Activated CD4-positive, alpha-beta memory T cell treated with anti-CD3 and anti-CD28 coated beads for 36 hours (primary cell): ENCODE measurements at regions of chr10 and their contacts with region 1.

Region 1: DNA sequence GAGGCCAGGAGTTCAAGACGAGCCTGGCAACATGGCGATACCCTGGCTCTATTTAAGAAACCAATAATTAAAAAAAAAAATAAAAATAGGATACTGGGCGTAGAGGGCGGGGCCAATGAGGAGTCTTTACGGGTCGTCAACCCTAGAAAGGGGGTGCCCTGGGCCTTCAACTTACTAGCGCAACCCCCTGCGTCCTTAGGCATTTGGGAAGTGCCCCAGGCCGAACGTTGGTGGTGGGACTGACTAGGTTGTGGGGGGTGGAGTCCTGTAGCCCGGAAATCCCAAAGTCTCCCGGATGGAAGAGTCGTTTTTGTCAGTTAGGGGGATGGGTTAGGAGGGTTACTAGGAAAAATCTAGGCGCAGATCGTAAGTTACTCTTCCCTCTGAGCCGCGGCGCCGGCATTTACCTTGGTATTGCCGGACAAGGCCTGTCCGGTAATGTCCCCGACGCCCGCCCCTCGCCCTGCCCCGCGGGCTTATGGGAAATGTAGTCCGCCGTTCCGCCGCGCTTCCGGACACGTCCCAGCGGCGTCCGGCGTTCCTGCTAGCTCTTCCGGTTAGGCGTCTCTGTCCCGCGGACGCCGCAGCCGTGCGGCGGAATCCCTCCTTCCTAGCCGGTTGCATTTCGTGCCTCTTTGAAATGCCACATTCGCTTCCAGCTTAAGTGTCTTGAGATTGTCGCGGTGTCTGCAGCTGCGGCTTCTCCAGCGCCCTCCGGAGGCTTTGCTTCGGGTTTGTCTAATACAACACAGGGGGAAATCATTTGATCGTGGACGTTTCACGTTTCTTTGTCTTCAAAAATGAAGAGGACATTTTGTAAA is 1.3 kb upstream of the ACBD5 start:
- DNase-seq: peak; percentile 93
- H3K4me3 Mint-ChIP-seq: peak overlapping the region; percentile 97
- H3K27ac Mint-ChIP-seq: peak overlapping the region; percentile 100
- H3K4me1 Mint-ChIP-seq: peaks cover 24% of the 10 kb centered on the region
- H3K27me3 Mint-ChIP-seq: no peaks in the 10 kb centered on the region

Region 2: DNA sequence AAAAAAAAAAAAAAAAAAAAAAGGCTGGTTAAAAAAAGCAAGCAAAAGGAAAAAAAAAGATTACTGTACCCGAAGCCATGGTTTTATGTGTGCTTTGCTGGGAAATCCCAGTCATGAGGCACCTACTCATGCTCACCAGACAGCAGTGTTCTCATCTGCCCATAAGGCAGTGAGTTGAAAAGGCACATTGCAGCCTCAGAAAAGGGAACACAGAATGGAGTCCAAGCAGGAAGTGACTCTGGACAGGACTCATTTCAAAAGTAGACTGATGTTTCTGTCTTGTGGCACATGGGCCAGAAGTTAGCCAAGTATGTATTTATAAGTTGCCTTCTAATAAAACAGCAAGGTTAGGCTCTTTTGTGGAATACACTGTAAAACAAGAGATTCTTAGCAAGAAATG is 504.1 kb before region 1 on chr10:
- CTCF ChIA-PET with region 1: no interaction called
- POLR2A ChIA-PET with region 1: no interaction called
- intact Hi-C with region 1: loop called (anchors 2 kb)
- DNase-seq: peak; percentile 75
- H3K4me3 Mint-ChIP-seq: no peak overlapping the region
- H3K27ac Mint-ChIP-seq: peak overlapping the region; percentile 97
- H3K4me1 Mint-ChIP-seq: peaks cover 58% of the 10 kb centered on the region
- H3K27me3 Mint-ChIP-seq: no peaks in the 10 kb centered on the region

Region 3: GRCh38 chr10:26969145-26969926 is 272.5 kb before region 1 on chr10:
- CTCF ChIA-PET with region 1: no interaction called
- POLR2A ChIA-PET with region 1: no interaction called
- intact Hi-C with region 1: no loop called
- DNase-seq: peak; percentile 26
- H3K4me3 Mint-ChIP-seq: no peak overlapping the region
- H3K27ac Mint-ChIP-seq: peak overlapping the region; percentile 34
- H3K4me1 Mint-ChIP-seq: peaks cover 21% of the 10 kb centered on the region
- H3K27me3 Mint-ChIP-seq: no peaks in the 10 kb centered on the region

Region 4: DNA sequence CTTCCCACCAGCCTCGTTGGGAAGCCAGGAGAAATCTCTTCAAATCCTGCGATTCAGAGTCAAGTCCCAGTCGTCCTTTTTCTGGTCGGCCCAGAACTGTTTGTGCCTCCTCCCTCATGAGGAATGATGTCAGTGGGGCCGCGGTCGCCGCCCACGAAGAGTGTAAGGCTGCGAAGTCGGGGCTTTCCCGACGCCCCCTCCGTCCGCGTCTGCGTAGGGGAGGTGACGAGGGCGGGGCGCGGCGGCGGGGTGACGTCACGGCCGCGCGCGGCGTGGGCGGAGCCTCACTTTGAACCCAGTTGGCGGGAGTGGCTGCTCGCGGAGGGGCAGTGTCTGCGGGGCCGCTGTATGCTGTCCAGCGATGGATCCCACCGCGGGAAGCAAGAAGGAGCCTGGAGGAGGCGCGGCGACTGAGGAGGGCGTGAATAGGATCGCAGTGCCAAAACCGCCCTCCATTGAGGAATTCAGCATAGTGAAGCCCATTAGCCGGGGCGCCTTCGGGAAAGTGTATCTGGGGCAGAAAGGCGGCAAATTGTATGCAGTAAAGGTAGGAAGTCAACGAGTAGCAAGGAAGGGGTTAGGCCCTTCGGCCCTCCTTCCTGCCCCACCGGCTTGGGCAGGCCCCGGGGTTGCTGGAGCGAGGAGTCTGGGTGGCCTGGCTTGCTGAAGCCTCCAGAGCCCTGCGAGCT is 86.7 kb before region 1 on chr10 and contains the start of gene MASTL:
- CTCF ChIA-PET with region 1: interaction called, 9 read pairs
- POLR2A ChIA-PET with region 1: interaction called, 30 read pairs
- intact Hi-C with region 1: loop called (anchors 1 kb)
- DNase-seq: peak; percentile 96
- H3K4me3 Mint-ChIP-seq: peak within 1 kb of the TSS; percentile 97
- H3K27ac Mint-ChIP-seq: peak within 1 kb of the TSS; percentile 100
- H3K4me1 Mint-ChIP-seq: peaks cover 39% of the 10 kb centered on the region
- H3K27me3 Mint-ChIP-seq: no peaks in the 10 kb centered on the region
- total RNA-seq, gene MASTL: 44.2 to 50.4 TPM

Region 5: GRCh38 chr10:27197980-27198620 is 43.8 kb before region 1 on chr10:
- CTCF ChIA-PET with region 1: no interaction called
- POLR2A ChIA-PET with region 1: no interaction called
- intact Hi-C with region 1: no loop called
- DNase-seq: no peak
- H3K4me3 Mint-ChIP-seq: no peak overlapping the region
- H3K27ac Mint-ChIP-seq: peak overlapping the region; percentile 5
- H3K4me1 Mint-ChIP-seq: no peaks in the 10 kb centered on the region
- H3K27me3 Mint-ChIP-seq: no peaks in the 10 kb centered on the region

Region 6: DNA sequence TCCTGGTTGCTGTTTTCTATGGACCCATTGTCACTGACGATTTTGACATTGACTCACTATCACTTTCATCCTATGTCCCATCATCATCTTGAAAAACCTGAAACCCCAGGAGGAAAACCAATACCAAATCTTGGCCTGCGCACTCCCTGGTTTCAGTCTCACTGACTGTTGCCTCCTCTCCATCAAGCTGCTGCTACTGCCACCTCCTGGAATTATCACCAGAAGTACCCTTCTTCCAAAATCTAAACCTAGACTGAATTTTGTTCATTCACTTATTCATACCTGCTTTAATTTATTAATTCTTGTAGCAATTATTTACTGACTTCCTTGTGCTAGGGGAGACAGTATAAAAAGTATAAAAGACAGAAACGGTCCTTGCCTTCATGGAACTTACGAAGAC is 43.2 kb after region 1 on chr10:
- CTCF ChIA-PET with region 1: no interaction called
- POLR2A ChIA-PET with region 1: no interaction called
- intact Hi-C with region 1: loop called (anchors 1 kb)
- DNase-seq: peak; percentile 70
- H3K4me3 Mint-ChIP-seq: no peak overlapping the region
- H3K27ac Mint-ChIP-seq: no peak overlapping the region
- H3K4me1 Mint-ChIP-seq: peaks cover 6% of the 10 kb centered on the region
- H3K27me3 Mint-ChIP-seq: no peaks in the 10 kb centered on the region

Region 7: GRCh38 chr10:27504007-27504807 is 262.3 kb after region 1 on chr10 and contains the start of gene RAB18:
- CTCF ChIA-PET with region 1: no interaction called
- POLR2A ChIA-PET with region 1: interaction called, 11 read pairs
- intact Hi-C with region 1: loop called (anchors 1 kb)
- DNase-seq: peak; percentile 99
- H3K4me3 Mint-ChIP-seq: peak within 1 kb of the TSS; percentile 100
- H3K27ac Mint-ChIP-seq: peak within 1 kb of the TSS; percentile 96
- H3K4me1 Mint-ChIP-seq: peaks cover 51% of the 10 kb centered on the region
- H3K27me3 Mint-ChIP-seq: no peaks in the 10 kb centered on the region
- total RNA-seq, gene RAB18: 51.7 to 54.0 TPM

Region 8: DNA sequence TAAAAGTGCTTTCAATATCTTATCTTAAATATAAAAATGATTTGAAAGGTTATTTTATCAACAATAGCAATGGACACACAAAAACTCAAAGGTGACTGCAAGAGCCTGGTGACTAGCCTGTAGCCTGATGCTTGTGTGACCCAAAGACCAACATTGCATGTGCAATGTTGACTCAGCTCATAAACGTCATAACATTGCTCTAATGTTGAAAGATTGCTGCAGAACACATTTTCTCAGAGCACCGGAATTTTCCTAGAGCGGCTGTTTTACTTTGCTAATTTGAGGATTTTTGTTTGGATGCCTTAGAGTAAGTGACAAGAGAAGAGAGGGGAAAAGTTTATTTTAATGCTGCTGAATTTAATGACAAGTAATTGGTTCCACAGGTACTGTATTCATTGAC is 369.4 kb after region 1 on chr10:
- CTCF ChIA-PET with region 1: no interaction called
- POLR2A ChIA-PET with region 1: no interaction called
- intact Hi-C with region 1: no loop called
- DNase-seq: no peak
- H3K4me3 Mint-ChIP-seq: no peak overlapping the region
- H3K27ac Mint-ChIP-seq: no peak overlapping the region
- H3K4me1 Mint-ChIP-seq: no peaks in the 10 kb centered on the region
- H3K27me3 Mint-ChIP-seq: no peaks in the 10 kb centered on the region

Region 9: GRCh38 chr10:27878281-27878680 is 636.4 kb after region 1 on chr10:
- CTCF ChIA-PET with region 1: no interaction called
- POLR2A ChIA-PET with region 1: no interaction called
- intact Hi-C with region 1: no loop called
- DNase-seq: no peak
- H3K4me3 Mint-ChIP-seq: no peak overlapping the region
- H3K27ac Mint-ChIP-seq: no peak overlapping the region
- H3K4me1 Mint-ChIP-seq: no peaks in the 10 kb centered on the region
- H3K27me3 Mint-ChIP-seq: peaks cover 7% of the 10 kb centered on the region